ENCODE measurements at regions of chr11 and their contacts with region 1.

Region 1: DNA sequence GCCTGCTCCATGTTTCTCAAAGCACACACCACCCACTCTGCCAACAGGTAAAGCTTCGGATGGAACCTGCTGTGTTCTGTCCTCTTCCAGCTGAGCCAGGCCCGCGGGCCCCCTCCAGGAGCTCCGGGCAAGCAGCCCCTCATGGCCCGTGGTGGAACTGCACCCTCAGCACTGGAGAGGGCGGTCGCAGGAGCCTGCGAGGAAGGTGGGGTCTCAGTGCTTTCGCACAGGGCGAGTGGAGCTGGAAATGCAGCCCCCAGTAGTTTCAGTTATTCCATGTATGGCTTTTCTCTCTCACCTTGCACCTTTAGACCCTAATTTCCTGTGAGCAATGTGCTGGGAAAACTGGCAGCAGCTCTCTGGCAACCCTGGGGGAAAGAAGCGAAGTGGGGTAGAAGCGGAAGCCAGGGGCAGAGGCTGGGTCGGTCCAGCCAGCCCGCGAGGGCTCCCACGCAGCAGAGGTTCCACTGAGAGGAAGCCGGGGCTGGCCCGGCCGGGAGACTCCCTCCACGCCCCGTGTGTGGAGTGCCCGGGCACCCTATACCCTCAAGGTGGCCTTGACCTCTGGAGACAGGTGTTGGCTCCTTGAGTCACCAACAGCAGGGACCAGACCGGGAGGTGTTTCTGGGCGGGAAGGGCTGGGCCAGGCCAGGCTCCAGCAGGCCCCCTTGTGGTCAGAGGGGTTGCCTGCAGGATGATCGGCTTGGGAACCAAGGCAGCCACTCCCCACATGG is 119.9 kb upstream of the TMEM45B start:
- DNase-seq: peak; percentile 71
- ATAC-seq: peak; percentile 75
- H3K4me3 ChIP-seq: no peak overlapping the region
- H3K27ac ChIP-seq: no peak overlapping the region
- H3K4me1 ChIP-seq: no peaks in the 10 kb centered on the region
- H3K27me3 ChIP-seq: 0 out of 2 replicates have a peak, but pooled peaks cover under 1% of the 10 kb centered on the region
- CTCF ChIP-seq: peak; percentile 71

Region 2: DNA sequence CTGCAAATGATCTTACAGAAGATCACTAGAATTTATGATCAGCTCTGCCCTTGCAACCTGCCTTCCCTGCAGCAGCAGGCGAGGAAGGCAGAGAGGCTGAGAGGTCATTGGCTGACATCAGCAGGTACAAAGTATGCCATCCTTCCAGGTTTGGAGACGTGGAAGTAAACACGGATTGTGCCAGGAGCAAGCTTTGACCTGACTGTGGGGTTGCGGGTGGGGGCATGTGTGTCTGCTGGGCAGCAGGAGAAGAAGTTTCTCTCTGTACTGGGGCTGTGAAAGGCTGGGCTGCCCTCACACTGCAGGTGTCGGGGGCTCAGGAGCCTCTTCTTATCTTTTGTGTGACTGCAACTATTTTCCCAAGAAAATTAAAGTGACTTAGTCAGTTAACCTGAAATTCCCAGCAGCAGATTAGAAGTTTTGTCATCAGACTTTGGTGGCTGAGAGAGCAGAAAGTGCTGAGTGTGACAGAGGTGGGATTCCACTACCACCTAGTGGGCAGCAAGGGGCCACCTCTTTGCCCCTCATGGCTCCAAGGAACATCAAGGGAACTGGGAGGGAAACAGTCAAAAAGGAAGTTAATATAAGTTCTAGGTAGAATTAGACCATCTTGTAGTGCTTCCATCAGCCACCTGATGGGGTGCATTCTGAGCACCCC is 1674.3 kb before region 1 on chr11:
- CTCF ChIA-PET with region 1: no interaction called
- POLR2A ChIA-PET with region 1: no interaction called
- intact Hi-C with region 1: no loop called
- DNase-seq: no peak
- ATAC-seq: no peak
- H3K4me3 ChIP-seq: no peak overlapping the region
- H3K27ac ChIP-seq: no peak overlapping the region
- H3K4me1 ChIP-seq: peaks cover 9% of the 10 kb centered on the region
- H3K27me3 ChIP-seq: peaks cover 41% of the 10 kb centered on the region
- CTCF ChIP-seq: peak; percentile 46

Region 3: DNA sequence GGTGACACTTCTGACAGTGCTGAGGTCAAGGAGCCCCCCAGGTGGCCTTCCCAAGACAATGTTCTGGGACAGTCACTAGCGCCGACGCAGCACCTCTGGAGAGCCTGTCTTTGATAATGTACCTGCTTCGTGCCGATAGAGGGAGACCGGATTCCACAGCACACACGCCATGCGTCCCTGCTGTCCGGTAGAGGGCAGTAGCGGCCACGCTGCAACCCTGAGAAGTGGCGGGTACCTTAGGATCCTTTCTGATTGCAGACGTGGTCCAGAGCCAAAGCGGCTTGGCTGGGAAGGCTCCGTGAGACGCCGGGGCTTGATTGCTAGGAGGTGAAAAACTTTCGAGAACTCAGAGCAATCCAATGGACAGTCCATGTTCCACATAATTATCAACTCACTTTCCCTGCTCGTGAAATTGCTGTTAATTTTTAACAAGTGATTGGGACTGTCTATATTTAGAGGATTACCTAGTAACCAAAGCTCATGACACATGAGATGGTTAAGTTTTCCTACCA is 331.5 kb before region 1 on chr11:
- CTCF ChIA-PET with region 1: no interaction called
- POLR2A ChIA-PET with region 1: no interaction called
- intact Hi-C with region 1: loop called (anchors 5 kb)
- DNase-seq: peak; percentile 96
- ATAC-seq: peak; percentile 90
- H3K4me3 ChIP-seq: peak overlapping the region; percentile 33; the same call in 1 of the 2 replicates
- H3K27ac ChIP-seq: no peak overlapping the region
- H3K4me1 ChIP-seq: peaks cover 31% of the 10 kb centered on the region
- H3K27me3 ChIP-seq: peaks cover 26% of the 10 kb centered on the region; the same call in 1 of the 2 replicates
- CTCF ChIP-seq: peak; percentile 100

Region 4: GRCh38 chr11:129375751-129376657 is 319.7 kb before region 1 on chr11 and contains the start of gene BARX2:
- CTCF ChIA-PET with region 1: interaction called, 4 read pairs
- POLR2A ChIA-PET with region 1: no interaction called
- intact Hi-C with region 1: loop called (anchors 1 kb)
- DNase-seq: peak; percentile 86
- ATAC-seq: peak; percentile 94
- H3K4me3 ChIP-seq: peak within 1 kb of the TSS; percentile 63
- H3K27ac ChIP-seq: no peak within 1 kb of the TSS
- H3K4me1 ChIP-seq: peaks cover 19% of the 10 kb centered on the region; the same call in 1 of the 2 replicates
- H3K27me3 ChIP-seq: peaks cover 81% of the 10 kb centered on the region
- CTCF ChIP-seq: peak; percentile 73
- total RNA-seq, gene BARX2: 0.47 and 1.2 TPM in 2 replicates

Region 5: DNA sequence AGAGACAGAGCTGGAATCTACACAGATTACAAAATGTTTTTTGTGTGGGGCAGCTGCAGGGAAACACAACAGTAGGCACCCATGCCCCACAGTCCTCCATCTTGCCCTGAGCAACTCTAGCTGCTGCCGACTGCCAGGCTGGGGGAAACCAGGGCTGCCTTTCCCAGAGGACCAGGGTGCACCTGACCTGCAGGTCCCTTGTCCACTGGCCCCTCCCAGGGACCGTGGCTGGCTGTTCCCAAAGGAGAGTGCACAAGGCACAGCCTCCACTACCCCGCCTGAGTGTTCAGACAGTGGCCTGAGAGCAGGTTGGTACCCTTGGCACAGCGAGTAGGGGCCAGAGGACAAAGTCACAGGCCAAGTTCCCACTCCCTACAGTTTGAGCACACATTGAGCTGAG is 138.3 kb before region 1 on chr11:
- CTCF ChIA-PET with region 1: no interaction called
- POLR2A ChIA-PET with region 1: no interaction called
- intact Hi-C with region 1: loop called (anchors 5 kb)
- DNase-seq: no peak
- ATAC-seq: no peak
- H3K4me3 ChIP-seq: no peak overlapping the region
- H3K27ac ChIP-seq: no peak overlapping the region
- H3K4me1 ChIP-seq: no peaks in the 10 kb centered on the region
- H3K27me3 ChIP-seq: peaks cover 26% of the 10 kb centered on the region
- CTCF ChIP-seq: no peak

Region 6: GRCh38 chr11:130227373-130227772 is 531.6 kb after region 1 on chr11:
- CTCF ChIA-PET with region 1: interaction called, 16 read pairs
- POLR2A ChIA-PET with region 1: no interaction called
- intact Hi-C with region 1: no loop called
- DNase-seq: no peak
- ATAC-seq: no peak
- H3K4me3 ChIP-seq: no peak overlapping the region
- H3K27ac ChIP-seq: no peak overlapping the region
- H3K4me1 ChIP-seq: no peaks in the 10 kb centered on the region
- H3K27me3 ChIP-seq: no peaks in the 10 kb centered on the region
- CTCF ChIP-seq: no peak